ENCODE measurements at regions of chr19 and their contacts with region 1.

Region 1: DNA sequence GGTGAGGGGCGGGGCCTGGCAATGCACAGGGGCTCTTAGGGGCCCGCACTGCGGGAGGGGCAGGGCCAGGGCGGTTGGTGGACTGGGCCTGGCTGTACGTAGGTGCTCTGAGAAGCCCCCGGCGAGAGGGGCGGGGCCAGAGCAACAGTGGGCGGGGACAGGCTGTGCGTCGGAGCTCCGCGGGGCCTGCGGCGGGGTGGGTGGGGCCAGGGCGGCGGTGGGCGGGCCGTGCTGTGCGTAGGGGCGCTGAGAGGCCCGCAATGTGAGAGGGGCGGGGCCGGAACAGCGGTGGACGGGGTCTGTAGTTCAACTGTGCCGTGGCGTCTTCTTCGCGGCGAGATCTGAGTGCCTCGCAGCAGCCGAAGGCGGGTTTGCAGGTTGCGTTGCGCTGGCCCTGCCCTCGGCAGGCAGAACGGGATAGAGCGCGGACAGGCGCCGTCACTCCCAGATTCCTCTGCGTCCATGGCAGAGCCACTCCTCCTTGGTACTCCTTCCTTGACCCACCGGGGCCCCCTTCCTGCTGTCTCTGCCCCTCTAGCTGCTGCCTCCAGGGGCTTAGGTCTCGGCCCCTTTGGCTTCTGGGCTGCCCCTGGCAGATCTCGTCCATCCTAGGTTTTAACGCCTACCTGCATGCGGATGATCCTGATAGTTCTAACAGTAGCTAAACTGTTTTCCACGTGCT is 33.2 kb downstream of the CCNE1 start:
- H3K4me3 Mint-ChIP-seq: peak overlapping the region; percentile 81
- H3K27ac Mint-ChIP-seq: peak overlapping the region; percentile 83
- H3K4me1 Mint-ChIP-seq: peaks cover 38% of the 10 kb centered on the region
- H3K27me3 Mint-ChIP-seq: peaks cover 25% of the 10 kb centered on the region

Region 2: GRCh38 chr19:29811125-29812079 is 33.6 kb before region 1 on chr19 and contains the start of gene CCNE1:
- intact Hi-C with region 1: loop called (anchors 1 kb)
- H3K4me3 Mint-ChIP-seq: peak within 1 kb of the TSS; percentile 77
- H3K27ac Mint-ChIP-seq: peak within 1 kb of the TSS; percentile 88
- H3K4me1 Mint-ChIP-seq: peaks cover 16% of the 10 kb centered on the region
- H3K27me3 Mint-ChIP-seq: peaks cover 6% of the 10 kb centered on the region

Region 3: DNA sequence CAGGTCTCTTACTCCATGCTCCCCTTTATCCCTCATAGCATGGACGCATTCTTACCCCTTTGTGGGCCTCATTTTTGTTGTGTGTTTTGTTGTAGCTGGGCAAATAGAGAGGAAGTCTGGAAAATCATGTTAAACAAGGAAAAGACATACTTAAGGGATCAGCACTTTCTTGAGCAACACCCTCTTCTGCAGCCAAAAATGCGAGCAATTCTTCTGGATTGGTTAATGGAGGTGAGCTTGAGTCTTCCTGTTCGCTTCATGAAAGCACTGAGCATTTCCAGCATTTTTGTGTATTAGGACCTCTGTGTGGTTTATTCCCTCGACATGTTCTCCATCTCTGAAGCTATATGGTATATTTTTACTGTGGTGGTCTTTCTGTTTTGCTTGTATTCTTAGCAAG is 27.7 kb before region 1 on chr19:
- intact Hi-C with region 1: loop called (anchors 2 kb)
- H3K4me3 Mint-ChIP-seq: no peak overlapping the region
- H3K27ac Mint-ChIP-seq: no peak overlapping the region
- H3K4me1 Mint-ChIP-seq: peaks cover 6% of the 10 kb centered on the region
- H3K27me3 Mint-ChIP-seq: peaks cover 6% of the 10 kb centered on the region

Region 4: GRCh38 chr19:29860492-29860891 is 15.5 kb after region 1 on chr19:
- intact Hi-C with region 1: no loop called
- H3K4me3 Mint-ChIP-seq: no peak overlapping the region
- H3K27ac Mint-ChIP-seq: no peak overlapping the region
- H3K4me1 Mint-ChIP-seq: peaks cover 10% of the 10 kb centered on the region
- H3K27me3 Mint-ChIP-seq: peaks cover 13% of the 10 kb centered on the region

Region 5: DNA sequence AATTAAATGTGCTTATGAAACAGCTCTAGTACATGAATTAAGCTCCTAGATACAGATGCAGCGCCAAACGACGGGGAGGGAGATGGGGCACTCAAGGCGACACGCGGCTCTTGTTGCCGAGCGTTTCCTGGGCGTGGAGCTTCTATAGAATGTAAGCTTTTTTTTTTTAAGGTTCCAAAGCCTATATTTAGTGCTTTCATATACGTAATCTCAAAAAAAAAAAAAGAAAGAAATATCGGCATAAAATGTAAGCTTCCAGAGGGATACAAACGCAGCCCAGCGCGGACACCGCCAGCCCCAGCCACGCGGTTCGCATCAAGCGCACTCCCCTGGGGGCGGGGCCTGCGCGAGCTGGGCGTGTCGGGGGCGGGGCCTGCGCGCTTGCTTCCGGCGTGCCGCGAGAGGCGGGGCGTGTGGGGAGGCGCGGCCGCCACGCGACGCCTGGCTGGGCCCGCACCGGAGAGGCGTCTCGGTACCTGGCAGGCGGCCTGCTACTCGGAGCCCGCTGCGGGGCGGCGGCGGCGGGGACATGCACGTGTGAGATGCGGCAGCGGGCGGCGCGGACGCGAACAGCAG is 96.9 kb after region 1 on chr19 and contains the start of gene URI1:
- intact Hi-C with region 1: loop called (anchors 2 kb)
- H3K4me3 Mint-ChIP-seq: peak within 1 kb of the TSS; percentile 95
- H3K27ac Mint-ChIP-seq: peak within 1 kb of the TSS; percentile 81
- H3K4me1 Mint-ChIP-seq: peaks cover 27% of the 10 kb centered on the region
- H3K27me3 Mint-ChIP-seq: peaks cover 9% of the 10 kb centered on the region

Region 6: GRCh38 chr19:29952177-29952576 is 107.1 kb after region 1 on chr19:
- intact Hi-C with region 1: no loop called
- H3K4me3 Mint-ChIP-seq: no peak overlapping the region
- H3K27ac Mint-ChIP-seq: no peak overlapping the region
- H3K4me1 Mint-ChIP-seq: peaks cover 24% of the 10 kb centered on the region
- H3K27me3 Mint-ChIP-seq: no peaks in the 10 kb centered on the region

Measured in dendritic cell treated with granulocyte-macrophage colony-stimulating factor and Interleukin-4, amounts not matched to agents 40 ng/mL and 50 ng/mL, for 4 days (primary cell).